ENCODE measurements at regions of chr16 and their contacts with region 1.

Region 1: GRCh38 chr16:85528528-85529387 is 84.4 kb upstream of the GSE1 start:
- DNase-seq: peak; percentile 79
- H3K4me3 ChIP-seq: no peak overlapping the region
- H3K27ac ChIP-seq: no peak overlapping the region
- H3K4me1 ChIP-seq: peaks cover 21% of the 10 kb centered on the region
- CTCF ChIP-seq: peak; percentile 72

Region 2: GRCh38 chr16:85286066-85286831 is 242.5 kb before region 1 on chr16:
- CTCF ChIA-PET with region 1: no interaction called
- POLR2A ChIA-PET with region 1: no interaction called
- intact Hi-C with region 1: no loop called
- DNase-seq: no peak
- H3K4me3 ChIP-seq: no peak overlapping the region
- H3K27ac ChIP-seq: no peak overlapping the region
- H3K4me1 ChIP-seq: no peaks in the 10 kb centered on the region
- CTCF ChIP-seq: no peak

Region 3: GRCh38 chr16:85554112-85554813 is 25.5 kb after region 1 on chr16:
- CTCF ChIA-PET with region 1: no interaction called
- POLR2A ChIA-PET with region 1: interaction called, 7 read pairs
- intact Hi-C with region 1: loop called (anchors 2 kb)
- DNase-seq: peak; percentile 88
- H3K4me3 ChIP-seq: peak overlapping the region; percentile 74
- H3K27ac ChIP-seq: peak overlapping the region; percentile 84
- H3K4me1 ChIP-seq: peaks cover 37% of the 10 kb centered on the region
- CTCF ChIP-seq: no peak

Region 4: GRCh38 chr16:85675251-85675927 is 146.6 kb after region 1 on chr16:
- CTCF ChIA-PET with region 1: no interaction called
- POLR2A ChIA-PET with region 1: no interaction called
- intact Hi-C with region 1: no loop called
- DNase-seq: peak; percentile 43
- H3K4me3 ChIP-seq: no peak overlapping the region
- H3K27ac ChIP-seq: no peak overlapping the region
- H3K4me1 ChIP-seq: no peaks in the 10 kb centered on the region
- CTCF ChIP-seq: peak; percentile 75

Region 5: GRCh38 chr16:85759631-85760419 is 231.1 kb after region 1 on chr16:
- CTCF ChIA-PET with region 1: no interaction called
- POLR2A ChIA-PET with region 1: no interaction called
- intact Hi-C with region 1: no loop called
- DNase-seq: peak; percentile 75
- H3K4me3 ChIP-seq: peak overlapping the region; percentile 46
- H3K27ac ChIP-seq: peak overlapping the region; percentile 90
- H3K4me1 ChIP-seq: peaks cover 73% of the 10 kb centered on the region
- CTCF ChIP-seq: peak; percentile 87

Region 6: GRCh38 chr16:85898521-85899442 is 370.0 kb after region 1 on chr16 and contains the start of gene IRF8:
- CTCF ChIA-PET with region 1: no interaction called
- POLR2A ChIA-PET with region 1: no interaction called
- intact Hi-C with region 1: no loop called
- DNase-seq: peak; percentile 92
- H3K4me3 ChIP-seq: peak within 1 kb of the TSS; percentile 96
- H3K27ac ChIP-seq: peak within 1 kb of the TSS; percentile 99
- H3K4me1 ChIP-seq: peaks cover 51% of the 10 kb centered on the region
- CTCF ChIP-seq: no peak
- total RNA-seq, gene IRF8: 181 and 188 TPM in 2 replicates

Measured in OCI-LY7 (cell line).